ENCODE measurements at regions of chr12 and their contacts with region 1.

Region 1: GRCh38 chr12:120580787-120581723 is at the start of gene POP5:
- DNase-seq: peak; percentile 93 to 96 (median 94)
- H3K4me3 ChIP-seq: peak within 1 kb of the TSS; percentile 48
- H3K27ac ChIP-seq: no peak within 1 kb of the TSS
- H3K4me1 ChIP-seq: no peaks in the 10 kb centered on the region
- H3K27me3 ChIP-seq: no peaks in the 10 kb centered on the region
- CTCF ChIP-seq: no peak
- EP300 ChIP-seq: no peak
- POLR2A ChIP-seq: no peak
- total RNA-seq, gene POP5: 13.6 to 29.5 (median 22.5) TPM

Region 2: DNA sequence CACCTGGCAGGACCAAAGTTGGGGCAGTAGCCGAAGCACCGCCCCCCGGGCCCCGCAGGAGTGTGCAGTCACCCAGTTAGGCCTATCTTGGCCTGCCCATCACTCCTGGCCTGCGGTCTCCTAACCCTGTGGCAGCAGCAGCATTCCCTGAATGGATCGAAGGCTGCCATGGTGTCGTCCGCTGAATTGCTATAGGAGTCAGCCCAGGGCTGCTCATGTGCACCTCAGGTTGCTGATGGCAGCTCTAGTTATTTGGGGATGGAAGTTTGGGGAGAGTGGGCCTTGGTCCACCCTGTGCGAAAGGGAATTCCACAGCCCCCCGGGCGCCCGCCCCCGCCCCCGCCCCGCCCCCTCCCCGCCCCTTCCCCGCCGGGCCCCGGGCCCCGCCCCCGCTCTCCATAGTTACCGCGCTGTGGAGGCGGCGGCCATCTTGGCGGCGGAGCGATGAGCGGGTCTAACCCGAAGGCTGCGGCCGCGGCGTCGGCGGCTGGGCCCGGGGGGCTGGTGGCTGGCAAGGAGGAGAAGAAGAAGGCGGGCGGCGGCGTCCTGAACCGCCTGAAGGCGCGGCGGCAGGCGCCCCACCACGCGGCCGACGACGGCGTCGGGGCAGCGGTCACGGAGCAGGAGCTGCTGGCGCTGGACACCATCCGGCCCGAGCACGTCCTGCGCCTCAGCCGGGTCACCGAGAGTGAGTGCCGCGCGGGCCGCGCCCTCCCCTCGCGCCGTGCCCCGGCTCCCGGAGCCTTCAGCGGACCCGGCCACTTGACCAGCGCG is 129.2 kb after region 1 on chr12 and contains the start of gene UNC119B:
- intact Hi-C with region 1: loop called in 3 of 4 experiments (anchors 10 kb)
- DNase-seq: peak; percentile 64 to 83 (median 80)
- H3K4me3 ChIP-seq: peak within 1 kb of the TSS; percentile 64
- H3K27ac ChIP-seq: peak within 1 kb of the TSS; percentile 56 to 76
- H3K4me1 ChIP-seq: peaks cover 4% of the 10 kb centered on the region
- H3K27me3 ChIP-seq: no peaks in the 10 kb centered on the region
- CTCF ChIP-seq: peak in 1 of 3 donors; percentile 6
- EP300 ChIP-seq: no peak
- POLR2A ChIP-seq: peak; percentile 53
- total RNA-seq, gene UNC119B: 18.4 to 54.4 (median 46.2) TPM

Region 3: GRCh38 chr12:120928864-120929652 is 348.0 kb after region 1 on chr12:
- intact Hi-C with region 1: no loop called
- DNase-seq: no peak
- H3K4me3 ChIP-seq: no peak overlapping the region
- H3K27ac ChIP-seq: no peak overlapping the region
- H3K4me1 ChIP-seq: no peaks in the 10 kb centered on the region
- H3K27me3 ChIP-seq: no peaks in the 10 kb centered on the region
- CTCF ChIP-seq: no peak
- EP300 ChIP-seq: no peak
- POLR2A ChIP-seq: no peak

Region 4: GRCh38 chr12:120961604-120962531 is 380.8 kb after region 1 on chr12:
- intact Hi-C with region 1: loop called in 2 of 4 experiments (anchors 5 to 10 kb)
- DNase-seq: no peak
- H3K4me3 ChIP-seq: no peak overlapping the region
- H3K27ac ChIP-seq: no peak overlapping the region
- H3K4me1 ChIP-seq: no peaks in the 10 kb centered on the region
- H3K27me3 ChIP-seq: no peaks in the 10 kb centered on the region
- CTCF ChIP-seq: no peak
- EP300 ChIP-seq: no peak
- POLR2A ChIP-seq: no peak

Region 5: GRCh38 chr12:121095544-121096198 is 514.6 kb after region 1 on chr12:
- intact Hi-C with region 1: loop called in 1 of 4 experiments (anchors 10 kb)
- DNase-seq: peak; percentile 62 to 82 (median 74)
- H3K4me3 ChIP-seq: peak overlapping the region; percentile 8
- H3K27ac ChIP-seq: no peak overlapping the region
- H3K4me1 ChIP-seq: peaks cover 3% of the 10 kb centered on the region
- H3K27me3 ChIP-seq: no peaks in the 10 kb centered on the region
- CTCF ChIP-seq: peak; percentile 58 to 81 (median 67)
- EP300 ChIP-seq: no peak
- POLR2A ChIP-seq: no peak